ENCODE measurements at regions of chr12 and their contacts with region 1.

Region 1: DNA sequence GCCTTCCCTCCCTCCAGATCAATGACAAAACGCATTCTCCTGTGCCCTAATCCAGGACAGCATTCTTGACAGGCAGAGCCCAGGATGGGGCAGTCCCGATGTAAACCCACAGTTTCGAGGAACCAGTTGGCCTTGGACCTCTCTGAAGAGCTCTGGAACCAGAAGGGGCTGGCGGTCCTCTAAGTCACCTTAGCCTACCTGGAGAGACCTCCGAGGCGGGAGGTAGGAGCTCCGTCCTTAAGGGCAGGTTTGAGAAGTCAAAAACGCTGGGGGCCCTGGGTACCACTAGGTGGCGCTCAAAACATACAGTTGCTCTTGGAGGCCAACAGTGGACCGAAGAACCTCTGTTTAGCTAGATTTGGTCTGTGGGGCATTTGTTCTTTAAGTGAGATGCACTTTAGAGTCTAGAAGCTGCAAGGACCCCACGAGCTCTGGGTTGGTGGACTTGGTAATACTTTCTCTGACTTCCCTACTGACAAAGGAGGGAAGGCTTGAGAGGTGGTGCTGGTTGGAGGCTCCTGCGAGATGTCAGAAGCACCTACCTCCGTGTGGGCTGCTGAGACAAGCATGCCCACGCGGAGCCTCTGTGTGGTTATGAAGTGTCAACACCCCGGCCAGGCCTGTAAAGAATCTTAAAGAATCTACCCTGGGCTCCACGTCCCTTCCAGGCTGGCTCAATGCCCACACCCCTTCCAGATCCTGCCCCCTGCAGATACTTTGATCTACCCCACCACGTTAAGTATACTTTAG is 74.8 kb upstream of the CHST11 start:
- DNase-seq: peak; percentile 67 to 89 (median 78)
- ATAC-seq: peak; percentile 89
- H3K4me3 ChIP-seq: no peak overlapping the region
- H3K4me3 Mint-ChIP-seq: no peak overlapping the region
- H3K27ac ChIP-seq: no peak overlapping the region
- H3K27ac Mint-ChIP-seq: no peak overlapping the region
- H3K4me1 ChIP-seq: peaks cover 9% of the 10 kb centered on the region
- H3K4me1 Mint-ChIP-seq: peaks cover 10% of the 10 kb centered on the region
- H3K27me3 ChIP-seq: no peaks in the 10 kb centered on the region
- H3K27me3 Mint-ChIP-seq: peaks cover 6% of the 10 kb centered on the region
- CTCF ChIP-seq: peak; percentile 91

Region 2: GRCh38 chr12:103114296-103115055 is 1267.4 kb before region 1 on chr12:
- CTCF ChIA-PET with region 1: no interaction called
- POLR2A ChIA-PET with region 1: no interaction called
- intact Hi-C with region 1: no loop called
- DNase-seq: no peak
- ATAC-seq: no peak
- H3K4me3 ChIP-seq: no peak overlapping the region
- H3K4me3 Mint-ChIP-seq: no peak overlapping the region
- H3K27ac ChIP-seq: no peak overlapping the region
- H3K27ac Mint-ChIP-seq: no peak overlapping the region
- H3K4me1 ChIP-seq: no peaks in the 10 kb centered on the region
- H3K4me1 Mint-ChIP-seq: no peaks in the 10 kb centered on the region
- H3K27me3 ChIP-seq: no peaks in the 10 kb centered on the region
- H3K27me3 Mint-ChIP-seq: no peaks in the 10 kb centered on the region
- CTCF ChIP-seq: no peak

Region 3: GRCh38 chr12:104345234-104346066 is 36.5 kb before region 1 on chr12:
- CTCF ChIA-PET with region 1: no interaction called
- POLR2A ChIA-PET with region 1: no interaction called
- intact Hi-C with region 1: no loop called
- DNase-seq: no peak
- ATAC-seq: no peak
- H3K4me3 ChIP-seq: no peak overlapping the region
- H3K4me3 Mint-ChIP-seq: no peak overlapping the region
- H3K27ac ChIP-seq: no peak overlapping the region
- H3K27ac Mint-ChIP-seq: no peak overlapping the region
- H3K4me1 ChIP-seq: no peaks in the 10 kb centered on the region
- H3K4me1 Mint-ChIP-seq: no peaks in the 10 kb centered on the region
- H3K27me3 ChIP-seq: no peaks in the 10 kb centered on the region
- H3K27me3 Mint-ChIP-seq: no peaks in the 10 kb centered on the region
- CTCF ChIP-seq: no peak

Region 4: DNA sequence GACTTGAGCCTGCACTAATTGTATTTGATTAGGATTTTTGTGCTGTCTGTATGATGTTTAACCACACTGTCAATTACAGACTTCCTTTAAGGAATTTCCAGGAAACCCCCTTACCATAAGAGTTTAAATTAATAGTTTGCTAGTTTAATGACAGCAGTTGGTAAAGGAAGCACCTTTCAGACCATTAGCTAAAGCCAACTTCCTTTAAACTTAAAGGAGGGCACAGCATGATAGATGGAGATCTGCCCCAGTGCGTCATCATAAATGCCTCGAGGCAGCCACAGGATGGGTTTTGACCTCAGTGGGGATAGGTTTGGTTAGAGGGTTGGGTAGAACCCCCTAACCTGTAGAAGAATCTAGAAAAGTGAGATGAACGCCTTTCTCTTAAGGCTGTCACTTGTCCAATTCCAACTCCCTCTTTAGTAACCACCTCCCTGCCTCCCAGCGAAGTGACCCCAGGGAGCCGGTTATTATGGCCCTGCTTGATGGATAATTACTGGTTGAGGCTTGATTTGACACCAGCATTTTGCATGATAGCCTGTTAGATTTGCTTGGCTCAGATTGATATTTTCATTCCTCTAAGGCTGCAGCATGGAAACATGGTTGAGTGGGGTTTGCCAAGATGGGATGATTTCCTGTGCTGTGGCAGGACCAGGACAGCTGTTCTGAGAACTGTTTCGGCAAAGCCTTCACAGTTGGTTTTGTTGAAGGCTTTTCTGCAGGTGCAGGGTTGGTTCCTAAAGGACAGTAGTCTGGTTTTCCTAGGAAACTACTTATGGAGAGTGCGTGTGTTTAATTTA is 137.5 kb after region 1 on chr12:
- CTCF ChIA-PET with region 1: interaction called, 7 read pairs
- POLR2A ChIA-PET with region 1: no interaction called
- intact Hi-C with region 1: loop called in 1 of 2 experiments (anchors 5 kb)
- DNase-seq: peak in 7 of 14 experiments; percentile 16 to 68 (median 30)
- ATAC-seq: peak; percentile 83
- H3K4me3 ChIP-seq: no peak overlapping the region
- H3K4me3 Mint-ChIP-seq: peak overlapping the region; percentile 1
- H3K27ac ChIP-seq: no peak overlapping the region
- H3K27ac Mint-ChIP-seq: peak overlapping the region; percentile 52
- H3K4me1 ChIP-seq: peaks cover 43% of the 10 kb centered on the region
- H3K4me1 Mint-ChIP-seq: peaks cover 95% of the 10 kb centered on the region
- H3K27me3 ChIP-seq: no peaks in the 10 kb centered on the region
- H3K27me3 Mint-ChIP-seq: no peaks in the 10 kb centered on the region
- CTCF ChIP-seq: no peak

Region 5: GRCh38 chr12:104569346-104570173 is 187.7 kb after region 1 on chr12:
- CTCF ChIA-PET with region 1: interaction called, 13 read pairs
- POLR2A ChIA-PET with region 1: no interaction called
- intact Hi-C with region 1: no loop called
- DNase-seq: peak in 10 of 14 experiments; percentile 11 to 82 (median 28)
- ATAC-seq: peak; percentile 75
- H3K4me3 ChIP-seq: peak overlapping the region; percentile 6
- H3K4me3 Mint-ChIP-seq: peak overlapping the region; percentile 2
- H3K27ac ChIP-seq: peak overlapping the region; percentile 13 to 59
- H3K27ac Mint-ChIP-seq: peak overlapping the region; percentile 71
- H3K4me1 ChIP-seq: peaks cover 33% of the 10 kb centered on the region
- H3K4me1 Mint-ChIP-seq: peaks cover 61% of the 10 kb centered on the region
- H3K27me3 ChIP-seq: no peaks in the 10 kb centered on the region
- H3K27me3 Mint-ChIP-seq: no peaks in the 10 kb centered on the region
- CTCF ChIP-seq: no peak

Region 6: GRCh38 chr12:104680066-104680465 is 298.2 kb after region 1 on chr12:
- CTCF ChIA-PET with region 1: no interaction called
- POLR2A ChIA-PET with region 1: no interaction called
- intact Hi-C with region 1: loop called (anchors 5 to 10 kb)
- DNase-seq: peak in 9 of 14 experiments; percentile 13 to 71 (median 25)
- ATAC-seq: peak; percentile 56
- H3K4me3 ChIP-seq: no peak overlapping the region
- H3K4me3 Mint-ChIP-seq: peak overlapping the region; percentile 43
- H3K27ac ChIP-seq: no peak overlapping the region
- H3K27ac Mint-ChIP-seq: peak overlapping the region; percentile 74
- H3K4me1 ChIP-seq: peaks cover 52% of the 10 kb centered on the region
- H3K4me1 Mint-ChIP-seq: peaks cover 59% of the 10 kb centered on the region
- H3K27me3 ChIP-seq: no peaks in the 10 kb centered on the region
- H3K27me3 Mint-ChIP-seq: no peaks in the 10 kb centered on the region
- CTCF ChIP-seq: no peak

Region 7: DNA sequence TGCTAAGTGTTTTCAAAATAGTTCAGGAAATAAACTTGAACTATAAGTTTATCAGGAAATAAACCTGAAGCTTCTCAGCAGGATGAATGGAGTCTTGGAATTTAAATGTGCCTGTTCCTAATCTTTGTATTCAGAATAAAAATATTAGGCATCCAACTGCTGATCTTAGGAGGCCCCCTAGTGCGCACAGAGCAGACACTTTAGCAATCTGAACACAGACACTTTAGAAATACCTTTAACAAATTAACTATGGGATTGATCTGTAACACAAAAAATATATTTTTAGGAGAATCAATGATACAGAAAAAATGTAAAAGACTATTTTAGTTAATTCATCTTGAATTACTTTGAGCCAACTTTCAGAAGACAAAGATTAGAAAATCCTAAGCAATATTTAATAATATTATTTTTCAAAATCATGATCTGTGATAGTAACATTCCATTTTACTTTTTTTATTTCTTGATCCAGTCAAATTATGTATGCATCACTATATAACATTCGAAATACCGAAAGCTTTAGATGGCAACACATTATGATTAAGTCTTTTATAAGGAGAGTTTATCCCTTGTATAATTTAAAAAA is 495.3 kb after region 1 on chr12:
- CTCF ChIA-PET with region 1: interaction called, 9 read pairs
- POLR2A ChIA-PET with region 1: no interaction called
- intact Hi-C with region 1: loop called (anchors 1 kb)
- DNase-seq: peak; percentile 14 to 61 (median 27)
- ATAC-seq: peak; percentile 56
- H3K4me3 ChIP-seq: no peak overlapping the region
- H3K4me3 Mint-ChIP-seq: no peak overlapping the region
- H3K27ac ChIP-seq: no peak overlapping the region
- H3K27ac Mint-ChIP-seq: no peak overlapping the region
- H3K4me1 ChIP-seq: no peaks in the 10 kb centered on the region
- H3K4me1 Mint-ChIP-seq: no peaks in the 10 kb centered on the region
- H3K27me3 ChIP-seq: no peaks in the 10 kb centered on the region
- H3K27me3 Mint-ChIP-seq: no peaks in the 10 kb centered on the region
- CTCF ChIP-seq: peak; percentile 86

Region 8: GRCh38 chr12:104958009-104958945 is 576.4 kb after region 1 on chr12 and contains the start of gene SLC41A2:
- CTCF ChIA-PET with region 1: interaction called, 8 read pairs
- POLR2A ChIA-PET with region 1: interaction called, 5 read pairs
- intact Hi-C with region 1: loop called in 1 of 2 experiments (anchors 5 kb)
- DNase-seq: peak; percentile 53 to 93 (median 72)
- ATAC-seq: peak; percentile 95
- H3K4me3 ChIP-seq: peak within 1 kb of the TSS; percentile 63
- H3K4me3 Mint-ChIP-seq: peak within 1 kb of the TSS; percentile 99
- H3K27ac ChIP-seq: no peak within 1 kb of the TSS
- H3K27ac Mint-ChIP-seq: peak within 1 kb of the TSS; percentile 93
- H3K4me1 ChIP-seq: peaks cover 15% of the 10 kb centered on the region
- H3K4me1 Mint-ChIP-seq: peaks cover 26% of the 10 kb centered on the region
- H3K27me3 ChIP-seq: no peaks in the 10 kb centered on the region
- H3K27me3 Mint-ChIP-seq: peaks cover 7% of the 10 kb centered on the region
- CTCF ChIP-seq: peak; percentile 19
- total RNA-seq, gene SLC41A2: 1.2 to 1.7 TPM